Tibial artery (tissue), 4 donors: ENCODE measurements at regions of chr19 and their contacts with region 1.

Region 1: DNA sequence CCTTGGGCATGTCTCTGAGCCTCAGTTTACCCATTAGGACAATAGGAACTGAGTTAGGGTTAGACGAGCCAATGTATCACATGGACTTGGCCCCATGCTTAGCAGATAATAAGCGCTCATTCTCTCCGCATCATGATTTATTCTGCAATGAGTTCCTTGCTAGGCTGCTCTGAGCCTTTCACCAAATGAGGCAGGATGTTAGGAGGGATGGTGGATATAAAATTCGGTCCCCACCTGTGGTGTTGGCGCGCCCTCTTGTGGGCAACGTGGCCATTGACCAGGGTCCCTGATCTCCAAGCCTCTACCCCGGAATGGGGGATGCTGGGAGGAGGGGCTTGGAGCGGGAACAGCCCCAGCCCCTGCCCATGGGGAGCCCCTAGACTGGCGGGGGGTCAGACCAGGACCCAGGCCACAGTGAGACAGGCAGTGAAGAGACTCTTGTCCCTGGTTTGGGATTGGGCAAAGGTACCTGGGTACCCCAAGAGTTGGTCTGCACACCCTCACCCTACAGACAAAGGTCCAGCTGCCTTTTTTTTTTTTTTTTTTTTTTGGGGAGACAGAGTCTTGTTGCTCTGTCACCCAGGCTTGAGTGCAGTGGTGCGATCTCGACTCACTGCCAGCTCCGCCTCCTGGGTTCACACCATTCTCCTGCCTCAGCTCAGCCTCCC is 43.9 kb downstream of the CERS4 start:
- DNase-seq: peak; percentile 76 to 86
- H3K4me3 ChIP-seq: no peak overlapping the region
- H3K27ac ChIP-seq: no peak overlapping the region
- H3K4me1 ChIP-seq: peaks cover 0 to 19% (median 6%) of the 10 kb centered on the region in 4 donors
- H3K27me3 ChIP-seq: no peaks in the 10 kb centered on the region
- CTCF ChIP-seq: peak; percentile 89

Region 2: DNA sequence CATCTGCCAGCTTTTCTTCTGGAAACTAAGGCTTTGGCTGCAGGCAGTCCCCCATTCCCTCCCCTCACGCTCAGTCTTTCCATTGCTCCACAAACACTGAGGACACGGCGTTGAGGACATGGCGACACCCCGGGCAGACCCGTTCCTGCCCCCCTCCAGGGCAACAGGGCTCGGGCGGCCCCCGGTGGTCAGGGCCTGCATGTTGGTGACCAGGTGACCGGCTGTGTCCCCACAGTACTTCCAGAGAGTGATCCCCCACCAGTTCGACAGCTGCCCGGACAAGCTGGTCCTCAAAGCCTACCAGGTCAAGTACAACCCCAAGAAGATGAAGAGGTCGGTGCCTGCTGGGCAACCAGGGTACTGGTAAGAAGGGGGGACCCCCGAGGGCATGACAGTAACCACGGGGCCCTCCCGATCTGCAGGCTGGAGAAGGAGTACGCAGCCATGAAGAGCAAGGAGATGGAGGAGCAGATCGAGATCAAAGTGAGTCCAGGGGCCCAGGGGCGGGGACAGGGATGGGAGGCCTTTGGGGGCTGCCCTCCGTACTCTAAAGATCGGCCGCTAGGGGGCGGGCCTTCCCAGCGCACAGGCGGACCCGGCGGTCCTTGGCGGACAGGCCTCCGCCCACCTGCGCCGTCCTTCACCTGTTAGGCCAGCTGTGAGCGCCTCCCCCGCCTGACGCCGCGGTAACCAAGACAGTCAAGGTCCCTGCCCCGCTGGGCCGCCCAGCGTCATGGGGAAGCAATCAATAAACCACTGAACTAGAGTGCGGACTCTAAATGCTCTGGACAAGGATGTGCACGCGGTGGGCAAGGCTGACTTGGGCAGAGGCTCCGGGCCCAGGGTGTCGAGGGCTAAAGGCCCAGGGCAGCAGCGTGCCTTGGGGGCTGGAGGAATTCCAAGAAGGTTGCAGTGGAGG is 399.9 kb before region 1 on chr19:
- intact Hi-C with region 1: loop called (anchors 5 kb)
- DNase-seq: no peak
- H3K4me3 ChIP-seq: no peak overlapping the region
- H3K27ac ChIP-seq: no peak overlapping the region
- H3K4me1 ChIP-seq: peaks cover 0 to 8% (median 0%) of the 10 kb centered on the region in 4 donors
- H3K27me3 ChIP-seq: peaks cover 0 to 10% of the 10 kb centered on the region in 2 donors
- CTCF ChIP-seq: peak; percentile 61 to 76

Region 3: DNA sequence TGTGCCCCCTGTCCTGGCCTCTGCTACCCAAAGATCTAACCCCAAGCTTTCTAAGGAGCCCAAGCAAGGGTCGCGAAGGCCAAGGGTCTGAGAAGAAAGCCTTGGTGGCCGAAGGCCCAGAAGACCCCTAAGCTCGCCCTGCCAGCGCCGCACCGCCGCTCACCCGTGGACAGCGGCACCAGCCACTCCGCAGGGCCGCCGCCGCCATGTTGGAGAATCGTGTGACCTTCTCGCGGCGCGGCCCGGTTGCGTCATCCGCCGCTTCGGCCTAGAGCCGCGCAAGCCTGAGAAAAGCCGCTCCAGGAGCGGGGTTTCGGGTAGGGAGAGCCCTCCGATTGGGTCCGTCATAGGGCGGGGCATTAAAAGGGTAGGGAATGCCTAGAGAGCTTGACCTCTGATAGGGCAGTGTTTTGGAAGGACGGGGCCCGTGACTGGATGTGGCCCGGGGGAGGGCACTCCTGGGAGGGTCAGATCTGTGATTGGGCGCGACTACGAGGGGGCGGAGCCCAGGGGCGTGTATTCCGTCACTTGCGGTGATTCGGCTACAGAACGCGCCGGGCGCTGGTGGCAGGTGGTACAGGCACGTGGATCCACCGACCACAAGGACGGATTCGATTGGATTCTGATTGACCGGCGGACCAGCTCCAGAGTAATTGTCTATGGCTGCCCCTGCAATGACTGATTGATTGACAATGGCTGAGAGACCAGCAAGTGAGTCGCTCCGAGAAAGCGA is 309.4 kb before region 1 on chr19 and contains the start of gene TIMM44:
- intact Hi-C with region 1: loop called (anchors 5 kb)
- DNase-seq: peak; percentile 99 to 100
- H3K4me3 ChIP-seq: peak within 1 kb of the TSS; percentile 82 to 93
- H3K27ac ChIP-seq: peak within 1 kb of the TSS; percentile 99 to 100
- H3K4me1 ChIP-seq: peaks cover 0 to 29% (median 17%) of the 10 kb centered on the region in 4 donors
- H3K27me3 ChIP-seq: no peaks in the 10 kb centered on the region
- CTCF ChIP-seq: no peak

Region 4: DNA sequence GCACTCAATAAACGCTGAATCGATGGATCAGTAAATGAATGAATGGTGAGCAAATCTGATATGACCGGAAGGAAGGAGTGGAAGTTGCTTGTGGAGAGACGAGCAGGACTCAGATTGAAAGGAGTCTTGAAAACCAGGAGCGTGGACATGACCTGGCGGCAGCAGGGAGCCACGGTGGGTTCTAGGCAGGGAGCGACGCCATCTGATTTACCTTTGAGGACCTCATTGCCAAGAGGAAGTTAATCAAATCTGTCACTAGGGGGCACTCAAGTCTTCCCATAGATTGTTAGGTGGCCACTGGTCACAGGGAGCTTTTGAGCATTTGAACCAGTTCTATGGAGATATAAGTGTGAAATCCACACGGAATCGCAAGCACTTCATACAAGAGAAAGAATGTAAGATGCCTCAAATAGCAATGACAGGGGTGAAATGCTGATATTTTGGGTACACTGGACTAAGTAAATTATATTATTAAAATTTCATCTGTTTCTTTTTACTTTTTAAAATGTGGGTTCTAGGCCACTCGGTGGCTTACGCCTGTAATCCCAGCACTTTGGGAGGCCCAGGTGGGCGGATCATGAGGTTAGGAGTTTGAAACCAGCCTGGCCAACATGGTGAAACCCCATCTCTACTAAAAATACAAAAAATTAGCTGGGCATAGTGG is 94.5 kb before region 1 on chr19:
- intact Hi-C with region 1: loop called (anchors 10 kb)
- DNase-seq: no peak
- H3K4me3 ChIP-seq: no peak overlapping the region
- H3K27ac ChIP-seq: no peak overlapping the region
- H3K4me1 ChIP-seq: peaks cover 0 to 9% (median 5%) of the 10 kb centered on the region in 4 donors
- H3K27me3 ChIP-seq: peaks cover 0 to 14% of the 10 kb centered on the region in 2 donors
- CTCF ChIP-seq: peak; percentile 27 to 48